GM18951 (cell line): ENCODE measurements at regions of chr22 and their contacts with region 1.

Region 1: GRCh38 chr22:21055587-21056319 is 10.0 kb downstream of the LRRC74B start:
- POLR2A ChIP-seq: no peak

Region 2: DNA sequence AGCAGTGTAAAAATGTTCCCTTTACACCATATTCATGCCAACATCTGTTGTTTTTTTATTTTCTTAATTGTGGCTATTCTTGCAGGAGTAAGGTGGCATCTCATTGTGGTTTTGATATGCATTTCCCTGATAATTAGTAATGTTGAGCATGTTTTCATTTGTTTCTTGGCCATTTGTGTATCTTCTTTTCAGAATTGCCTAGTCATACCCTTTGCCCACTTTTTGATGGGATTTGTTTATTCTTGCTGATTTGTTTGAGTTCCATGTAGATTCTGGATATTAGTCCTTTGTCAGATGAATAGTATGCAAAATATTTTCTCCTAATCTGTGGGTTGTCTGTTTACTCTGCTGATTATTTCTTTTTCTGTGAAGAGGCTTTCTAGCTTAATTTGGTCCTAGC is 380.8 kb before region 1 on chr22:
- in situ Hi-C with region 1: loop called (anchors 10 kb)
- POLR2A ChIP-seq: no peak